Cardiac septum (tissue), 1 donor: ENCODE measurements at regions of chr1 and their contacts with region 1.

Region 1: GRCh38 chr1:89598450-89599331 is 34.2 kb upstream of the LRRC8C start:
- DNase-seq: no peak

Region 2: DNA sequence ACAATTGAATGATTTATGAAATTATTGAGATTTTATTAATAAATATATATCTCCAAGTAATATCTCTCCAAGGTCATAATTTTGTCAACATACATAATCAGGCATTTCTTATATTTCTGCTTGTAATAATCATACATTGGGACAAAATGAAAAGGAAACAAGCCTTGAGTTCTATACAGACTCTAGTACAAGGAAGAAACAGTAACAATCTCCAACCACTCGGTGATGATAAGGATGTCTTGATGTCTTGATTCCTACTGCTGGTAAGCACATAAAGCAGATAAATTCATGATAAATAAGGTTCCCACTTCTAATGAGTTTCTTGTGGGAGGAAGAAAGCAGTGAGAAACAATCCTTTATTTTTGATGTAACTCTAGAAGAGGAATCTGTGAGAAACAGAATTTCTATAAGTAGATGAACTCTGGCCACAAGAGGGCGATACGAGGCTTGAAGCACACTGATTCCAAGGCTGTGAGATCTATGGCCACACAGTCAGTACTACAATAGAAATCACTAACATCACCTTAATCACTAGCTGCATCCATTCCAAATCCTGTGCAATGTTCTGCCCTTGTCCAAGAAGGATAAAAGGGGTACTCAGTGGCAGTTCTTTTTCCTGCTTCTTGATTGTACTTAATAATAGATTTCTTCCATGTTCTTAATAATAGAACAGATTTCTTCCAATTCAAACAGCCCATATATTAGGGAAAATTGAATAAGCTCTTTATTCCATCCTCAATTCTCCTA is 115.5 kb before region 1 on chr1:
- intact Hi-C with region 1: loop called (anchors 2 kb)
- DNase-seq: peak; percentile 80

Region 3: DNA sequence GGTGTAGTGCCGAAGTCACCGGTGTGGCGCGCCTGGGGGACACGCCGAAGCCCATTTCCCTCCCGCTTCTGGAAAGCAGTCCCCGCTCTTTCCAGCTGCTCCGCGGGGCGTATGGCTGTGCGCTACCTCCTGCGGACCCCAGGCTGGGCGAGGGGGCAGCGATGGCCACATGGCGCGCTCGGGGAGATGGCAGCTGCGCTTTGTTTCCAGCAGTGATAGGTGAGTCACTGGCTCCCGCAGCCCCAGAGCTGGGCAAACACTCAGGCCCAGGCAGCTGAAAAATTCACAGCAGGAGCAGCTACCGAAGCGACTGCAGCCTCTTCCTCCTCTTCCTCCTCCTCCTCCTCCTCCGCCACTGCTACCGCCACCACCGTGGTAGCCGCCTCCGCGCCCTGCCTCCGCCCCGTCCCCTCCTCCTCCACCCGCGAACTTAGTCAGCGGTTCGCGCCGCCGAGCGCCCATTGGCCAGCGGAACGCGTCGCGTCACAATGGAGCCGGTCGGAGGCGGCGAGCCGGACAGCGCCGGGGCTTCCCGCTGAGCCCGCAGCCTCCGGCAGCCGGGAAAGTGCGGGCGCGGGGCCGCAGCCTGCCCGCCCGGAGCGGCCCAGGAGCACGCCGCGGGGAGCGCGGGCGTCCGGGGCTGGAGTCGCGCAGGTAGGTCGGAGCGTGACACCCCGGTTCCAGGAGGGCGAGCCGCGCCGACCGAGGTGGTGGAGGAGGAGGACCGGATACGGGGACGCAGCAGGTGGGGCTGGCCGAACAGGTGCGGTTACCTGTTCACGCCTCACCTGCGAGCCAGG is 74.1 kb before region 1 on chr1 and contains the start of gene LRRC8B:
- intact Hi-C with region 1: loop called (anchors 5 kb)
- DNase-seq: peak; percentile 98
- total RNA-seq, gene LRRC8B: 4.5 TPM